Natural killer cell (primary cell): ENCODE measurements at regions of chr3 and their contacts with region 1.

Region 1: GRCh38 chr3:44338010-44338827 is at the start of gene TCAIM:
- DNase-seq: peak; percentile 98 to 100
- ATAC-seq: peak; percentile 92 to 98 (median 93)
- H3K4me3 ChIP-seq: peak within 1 kb of the TSS; percentile 81
- H3K4me3 Mint-ChIP-seq: peak within 1 kb of the TSS; percentile 96
- H3K27ac ChIP-seq: peak within 1 kb of the TSS; percentile 87
- H3K27ac Mint-ChIP-seq: peak within 1 kb of the TSS; percentile 95 to 96
- H3K4me1 ChIP-seq: peaks cover 13% of the 10 kb centered on the region
- H3K4me1 Mint-ChIP-seq: peaks cover 25 to 32% of the 10 kb centered on the region in 2 donors
- H3K27me3 ChIP-seq: no peaks in the 10 kb centered on the region
- H3K27me3 Mint-ChIP-seq: peaks cover 6 to 9% of the 10 kb centered on the region in 2 donors
- CTCF ChIP-seq: no peak
- total RNA-seq, gene TCAIM: 10.9 to 11.2 (median 11.0) TPM

Region 2: DNA sequence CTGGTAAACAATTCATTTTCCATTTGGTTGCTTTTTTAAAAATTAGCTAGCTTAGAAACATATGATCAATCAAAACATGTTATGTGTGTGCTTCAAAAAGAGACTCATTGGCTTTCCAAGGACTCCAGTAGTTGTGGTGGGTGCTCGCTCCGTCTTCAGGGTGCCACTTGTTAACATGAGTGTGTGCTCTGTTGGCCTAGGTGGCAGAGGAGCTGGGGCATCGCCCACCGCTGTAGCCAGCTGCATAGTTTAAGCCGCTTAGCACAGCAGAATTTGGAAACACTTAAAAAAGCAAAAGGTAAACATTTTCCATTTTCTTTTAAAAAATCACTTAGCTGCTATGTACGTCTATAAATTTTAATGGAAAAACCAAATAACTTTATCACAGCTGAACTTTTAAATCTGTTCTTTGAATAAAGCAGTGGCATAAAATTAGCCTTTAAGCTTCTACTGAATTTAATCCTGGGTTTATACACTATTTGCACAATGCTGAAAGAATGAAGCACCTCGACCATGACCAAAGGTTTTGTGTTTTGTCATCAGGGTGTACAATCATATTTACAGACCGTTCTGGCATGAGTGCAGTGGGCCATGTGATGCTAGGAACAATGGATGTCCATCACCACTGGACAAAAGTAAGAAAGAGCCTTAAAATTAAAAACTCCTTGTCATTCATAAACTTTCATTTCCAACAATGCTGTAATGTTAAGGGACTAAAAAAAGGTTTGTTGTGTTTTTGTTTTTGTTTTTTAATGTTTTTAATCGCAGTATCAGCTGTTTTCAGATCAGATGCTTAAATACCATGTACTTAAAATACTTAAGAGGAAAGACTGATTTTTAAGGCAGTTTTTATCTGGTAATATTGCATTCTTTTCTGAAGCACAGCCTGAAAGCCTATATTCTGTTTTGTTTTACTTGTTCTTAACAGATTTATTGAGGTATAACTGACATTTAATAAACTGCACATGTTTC is 58.3 kb after region 1 on chr3:
- intact Hi-C with region 1: no loop called
- DNase-seq: no peak
- ATAC-seq: no peak
- H3K4me3 ChIP-seq: no peak overlapping the region
- H3K4me3 Mint-ChIP-seq: no peak overlapping the region
- H3K27ac ChIP-seq: no peak overlapping the region
- H3K27ac Mint-ChIP-seq: no peak overlapping the region
- H3K4me1 ChIP-seq: no peaks in the 10 kb centered on the region
- H3K4me1 Mint-ChIP-seq: peaks cover 0 to 2% of the 10 kb centered on the region in 2 donors
- H3K27me3 ChIP-seq: no peaks in the 10 kb centered on the region
- H3K27me3 Mint-ChIP-seq: no peaks in the 10 kb centered on the region
- CTCF ChIP-seq: no peak

Region 3: DNA sequence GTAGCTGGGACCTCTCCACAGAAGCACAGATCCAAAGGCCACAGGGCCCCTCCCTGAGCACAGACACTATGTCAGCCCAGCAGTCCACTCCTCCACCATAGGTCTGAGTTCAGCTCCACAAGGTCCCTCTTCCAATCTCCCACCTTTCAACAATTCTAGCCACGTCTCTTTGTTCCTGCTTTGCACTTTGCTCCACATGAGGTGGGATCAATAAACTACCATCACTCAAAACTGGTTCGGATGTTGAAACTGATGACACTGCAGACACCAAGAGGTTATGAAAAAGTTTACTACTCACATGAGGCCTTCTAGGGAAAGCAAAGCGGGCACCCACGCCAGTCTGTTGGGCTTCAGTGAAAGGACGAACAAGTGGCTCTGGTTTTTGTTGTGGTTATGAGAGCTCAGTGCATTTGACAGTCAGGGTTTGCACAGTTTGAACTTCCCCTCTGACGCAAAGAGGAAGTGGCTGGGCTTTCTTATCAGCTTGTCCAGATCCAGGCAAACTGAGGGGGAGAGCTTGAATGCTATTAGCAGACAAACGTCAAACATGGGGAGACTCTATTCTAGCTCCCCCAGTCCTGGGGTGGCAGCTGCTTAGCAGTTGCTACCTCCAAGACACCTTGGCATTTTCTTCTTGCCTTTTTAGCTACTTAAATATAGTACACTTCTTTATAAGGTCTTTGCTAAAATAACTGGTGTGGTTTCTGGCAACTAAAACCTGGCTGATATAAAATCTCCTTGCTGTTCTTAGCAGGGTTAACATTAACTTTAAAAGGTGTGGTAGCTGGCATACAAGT is 101.5 kb after region 1 on chr3:
- intact Hi-C with region 1: loop called (anchors 2 kb)
- DNase-seq: peak; percentile 64 to 86
- ATAC-seq: peak; percentile 81 to 92 (median 90)
- H3K4me3 ChIP-seq: no peak overlapping the region
- H3K4me3 Mint-ChIP-seq: peak overlapping the region; percentile 86
- H3K27ac ChIP-seq: peak overlapping the region; percentile 93
- H3K27ac Mint-ChIP-seq: peak overlapping the region; percentile 93 to 100
- H3K4me1 ChIP-seq: peaks cover 24% of the 10 kb centered on the region
- H3K4me1 Mint-ChIP-seq: peaks cover 32 to 33% of the 10 kb centered on the region in 2 donors
- H3K27me3 ChIP-seq: no peaks in the 10 kb centered on the region
- H3K27me3 Mint-ChIP-seq: no peaks in the 10 kb centered on the region
- CTCF ChIP-seq: no peak

Region 4: GRCh38 chr3:44510000-44510368 is 171.8 kb after region 1 on chr3:
- intact Hi-C with region 1: loop called (anchors 1 kb)
- DNase-seq: peak in 1 of 2 donors; percentile 56
- ATAC-seq: peak in 2 of 3 donors; percentile 7 to 10
- H3K4me3 ChIP-seq: peak overlapping the region; percentile 94
- H3K4me3 Mint-ChIP-seq: peak overlapping the region; percentile 93
- H3K27ac ChIP-seq: peak overlapping the region; percentile 75
- H3K27ac Mint-ChIP-seq: peak overlapping the region; percentile 87 to 94
- H3K4me1 ChIP-seq: peaks cover 19% of the 10 kb centered on the region
- H3K4me1 Mint-ChIP-seq: peaks cover 35 to 38% of the 10 kb centered on the region in 2 donors
- H3K27me3 ChIP-seq: no peaks in the 10 kb centered on the region
- H3K27me3 Mint-ChIP-seq: no peaks in the 10 kb centered on the region
- CTCF ChIP-seq: no peak